Cardiac septum (tissue), 1 donor: ENCODE measurements at regions of chr3 and their contacts with region 1.

Region 1: DNA sequence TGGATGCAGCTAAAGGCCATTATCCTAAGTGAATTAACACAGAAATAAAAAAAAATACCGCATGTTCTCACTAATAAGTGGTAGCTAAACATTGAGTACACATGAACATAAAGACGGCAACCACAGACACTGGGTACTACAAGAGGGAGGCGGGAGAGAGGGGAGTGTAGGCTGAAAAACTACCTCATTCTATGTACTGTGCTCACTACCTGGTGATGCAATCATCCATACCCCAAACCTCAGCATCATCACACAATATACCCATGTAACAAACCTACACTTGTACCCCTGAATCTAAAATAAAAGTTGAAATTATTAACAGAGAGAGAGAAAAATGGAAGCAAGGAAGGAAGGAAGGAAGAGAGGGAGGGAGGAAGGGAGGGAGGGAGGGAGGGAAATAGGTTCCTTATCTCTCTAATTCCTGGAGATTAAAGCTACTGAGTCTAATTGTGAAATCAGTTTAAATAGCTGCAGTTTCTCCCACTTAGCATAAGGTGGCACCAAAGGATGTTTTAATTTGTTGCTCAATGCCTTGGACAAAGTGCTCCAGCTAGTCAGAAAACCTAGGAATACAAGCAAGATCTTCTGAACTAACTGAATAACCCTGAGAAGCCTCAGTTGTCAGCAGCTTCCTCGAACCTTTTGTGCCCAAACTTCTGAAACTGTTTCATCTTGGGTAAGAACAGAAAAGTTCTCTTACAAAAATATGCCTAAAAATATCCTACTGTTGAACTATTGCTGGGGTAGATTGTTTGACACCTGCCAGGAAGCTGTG is 79.4 kb upstream of the ATP11B start:
- DNase-seq: no peak

Region 2: DNA sequence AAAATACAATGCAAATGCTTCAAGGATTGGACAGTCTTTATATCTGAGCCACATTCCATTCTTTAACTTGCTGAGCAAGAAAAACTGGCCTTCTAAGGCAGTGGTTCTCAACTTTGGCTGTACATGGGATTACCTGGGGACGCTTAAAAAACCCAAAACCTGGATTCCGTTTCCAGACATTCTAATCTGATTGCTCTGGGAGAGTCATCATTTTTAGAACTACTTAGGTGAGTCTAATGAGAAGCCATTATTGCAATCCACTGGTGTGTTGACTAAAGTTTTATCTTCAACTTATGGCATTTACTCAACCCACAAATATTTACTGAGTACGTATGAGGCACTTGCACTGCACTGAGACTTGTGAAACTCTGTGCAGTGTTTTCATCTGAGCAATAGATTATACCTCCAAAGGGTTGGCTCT is 116.3 kb before region 1 on chr3:
- intact Hi-C with region 1: no loop called
- DNase-seq: no peak

Region 3: DNA sequence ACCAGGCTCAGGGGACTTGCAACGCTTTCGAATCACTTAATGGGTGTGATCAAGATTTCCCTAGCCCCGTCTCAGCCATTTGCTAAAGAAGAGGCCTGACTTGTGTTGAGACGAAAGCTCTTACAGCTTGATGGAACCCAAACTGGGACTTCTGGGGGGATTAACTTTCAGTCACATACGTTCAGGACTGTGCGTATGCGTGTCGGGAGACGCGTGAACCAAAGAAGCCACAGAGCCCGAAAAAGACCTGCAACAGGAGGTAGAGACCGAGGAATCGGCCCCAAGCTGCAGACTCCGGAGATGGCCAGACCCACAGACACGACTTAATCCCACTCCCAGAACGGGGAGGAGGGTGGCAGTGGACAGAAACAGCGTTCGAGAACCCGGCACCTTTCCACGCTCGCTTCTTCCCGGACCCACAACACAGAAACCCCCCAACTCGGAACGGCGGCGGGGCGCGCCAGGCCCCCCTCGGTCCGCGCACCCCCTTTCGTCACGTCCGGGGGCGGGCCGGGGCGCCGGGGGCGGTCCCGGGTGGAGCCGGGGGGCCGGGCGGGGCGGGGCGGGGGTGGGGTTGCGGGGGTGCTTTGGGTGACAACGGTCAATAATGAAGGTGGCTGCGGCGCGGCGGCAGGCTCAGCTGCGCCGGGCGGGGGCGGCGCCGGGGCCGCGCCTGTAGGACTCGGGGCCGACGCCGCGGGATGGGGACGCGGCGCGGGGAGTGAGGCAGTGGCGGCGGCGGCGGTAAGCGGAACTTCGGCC is 79.2 kb after region 1 on chr3 and contains the start of gene ATP11B:
- intact Hi-C with region 1: loop called (anchors 5 kb)
- DNase-seq: peak; percentile 91
- total RNA-seq, gene ATP11B: 40.6 TPM

Region 4: GRCh38 chr3:182837855-182838454 is 124.0 kb after region 1 on chr3:
- intact Hi-C with region 1: loop called (anchors 1 kb)
- DNase-seq: no peak